ENCODE measurements at regions of chr3 and their contacts with region 1.

Region 1: DNA sequence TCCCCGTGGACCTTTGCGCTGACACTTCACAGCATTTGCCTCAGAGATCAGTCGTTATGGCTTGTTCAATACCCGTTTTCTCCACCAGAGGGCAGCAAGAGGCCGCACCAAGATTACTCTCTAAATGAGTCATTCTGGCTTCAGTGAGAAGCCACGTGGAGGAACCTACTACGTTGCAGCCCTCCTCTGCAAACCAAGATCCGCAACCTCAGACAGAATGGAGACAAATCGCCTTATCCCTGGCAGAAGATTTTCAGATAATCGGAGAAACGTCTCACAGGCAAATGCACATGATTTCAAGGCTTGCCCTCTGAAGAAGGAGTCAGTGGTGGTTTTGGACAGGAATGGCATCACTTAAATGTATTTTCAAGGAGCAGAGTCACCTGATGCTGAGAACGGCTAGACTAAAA is 60.5 kb downstream of the GTPBP8 start:
- DNase-seq: peak; percentile 80
- H3K4me3 Mint-ChIP-seq: no peak overlapping the region
- H3K27ac Mint-ChIP-seq: no peak overlapping the region
- H3K4me1 Mint-ChIP-seq: no peaks in the 10 kb centered on the region
- H3K27me3 Mint-ChIP-seq: no peaks in the 10 kb centered on the region
- CTCF ChIP-seq: peak; percentile 85

Region 2: GRCh38 chr3:112699436-112699978 is 351.8 kb before region 1 on chr3:
- CTCF ChIA-PET with region 1: no interaction called
- POLR2A ChIA-PET with region 1: no interaction called
- intact Hi-C with region 1: no loop called
- DNase-seq: peak; percentile 66
- H3K4me3 Mint-ChIP-seq: no peak overlapping the region
- H3K27ac Mint-ChIP-seq: no peak overlapping the region
- H3K4me1 Mint-ChIP-seq: peaks cover 8% of the 10 kb centered on the region
- H3K27me3 Mint-ChIP-seq: peaks cover 21% of the 10 kb centered on the region
- CTCF ChIP-seq: peak; percentile 44

Region 3: DNA sequence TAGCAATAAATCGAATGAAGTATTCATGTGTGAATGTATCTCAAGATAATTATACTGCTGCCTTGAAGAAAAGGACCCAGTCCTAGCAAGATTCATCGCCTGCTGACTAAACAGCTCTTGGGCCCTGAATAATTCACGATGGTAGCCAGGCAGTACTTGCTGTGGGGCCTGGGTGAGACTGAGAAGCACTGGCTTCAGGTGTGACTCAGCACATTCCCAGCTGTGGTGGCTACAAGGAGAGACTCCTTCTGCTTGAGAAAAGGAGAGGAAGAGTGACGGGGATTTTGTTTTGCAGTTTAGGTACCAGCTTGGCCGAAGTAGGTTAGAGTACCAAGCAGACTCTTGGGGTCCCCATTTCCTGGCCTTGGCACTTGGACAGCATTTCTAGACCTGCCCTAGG is 157.0 kb before region 1 on chr3:
- CTCF ChIA-PET with region 1: no interaction called
- POLR2A ChIA-PET with region 1: no interaction called
- intact Hi-C with region 1: no loop called
- DNase-seq: peak; percentile 22
- H3K4me3 Mint-ChIP-seq: no peak overlapping the region
- H3K27ac Mint-ChIP-seq: no peak overlapping the region
- H3K4me1 Mint-ChIP-seq: no peaks in the 10 kb centered on the region
- H3K27me3 Mint-ChIP-seq: no peaks in the 10 kb centered on the region
- CTCF ChIP-seq: no peak

Region 4: DNA sequence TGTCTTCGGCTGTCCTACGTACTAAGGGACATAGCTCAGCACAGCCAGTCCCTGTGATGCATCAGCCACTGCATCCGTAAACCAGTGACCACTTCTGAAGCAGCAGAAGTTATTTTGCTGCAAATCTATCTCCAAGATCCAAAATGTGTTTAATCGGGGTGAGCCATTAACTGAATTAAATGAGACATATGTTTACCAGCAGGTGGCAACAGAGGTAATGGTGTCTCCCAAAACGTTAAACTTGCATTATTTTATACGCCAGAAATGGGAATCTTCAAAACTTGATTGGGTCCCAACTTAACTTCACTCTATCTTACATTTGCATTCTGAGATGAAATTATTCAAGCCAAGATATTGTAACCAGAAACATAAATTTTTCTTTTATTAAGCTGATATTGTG is 84.8 kb after region 1 on chr3:
- CTCF ChIA-PET with region 1: interaction called, 3 read pairs
- POLR2A ChIA-PET with region 1: no interaction called
- intact Hi-C with region 1: loop called (anchors 1 kb)
- DNase-seq: peak; percentile 53
- H3K4me3 Mint-ChIP-seq: no peak overlapping the region
- H3K27ac Mint-ChIP-seq: no peak overlapping the region
- H3K4me1 Mint-ChIP-seq: no peaks in the 10 kb centered on the region
- H3K27me3 Mint-ChIP-seq: no peaks in the 10 kb centered on the region
- CTCF ChIP-seq: peak; percentile 32

Region 5: GRCh38 chr3:113183748-113184661 is 132.7 kb after region 1 on chr3:
- CTCF ChIA-PET with region 1: no interaction called
- POLR2A ChIA-PET with region 1: no interaction called
- intact Hi-C with region 1: no loop called
- DNase-seq: peak; percentile 52
- H3K4me3 Mint-ChIP-seq: no peak overlapping the region
- H3K27ac Mint-ChIP-seq: no peak overlapping the region
- H3K4me1 Mint-ChIP-seq: no peaks in the 10 kb centered on the region
- H3K27me3 Mint-ChIP-seq: no peaks in the 10 kb centered on the region
- CTCF ChIP-seq: no peak

Region 6: GRCh38 chr3:113211330-113212149 is 160.2 kb after region 1 on chr3 and contains the start of gene BOC:
- CTCF ChIA-PET with region 1: no interaction called
- POLR2A ChIA-PET with region 1: interaction called, 3 read pairs
- intact Hi-C with region 1: loop called (anchors 5 kb)
- DNase-seq: peak; percentile 44
- H3K4me3 Mint-ChIP-seq: peak within 1 kb of the TSS; percentile 75
- H3K27ac Mint-ChIP-seq: no peak within 1 kb of the TSS
- H3K4me1 Mint-ChIP-seq: peaks cover 18% of the 10 kb centered on the region
- H3K27me3 Mint-ChIP-seq: no peaks in the 10 kb centered on the region
- CTCF ChIP-seq: no peak
- total RNA-seq, gene BOC: 1.8 and 2.3 TPM in 2 replicates

Region 7: DNA sequence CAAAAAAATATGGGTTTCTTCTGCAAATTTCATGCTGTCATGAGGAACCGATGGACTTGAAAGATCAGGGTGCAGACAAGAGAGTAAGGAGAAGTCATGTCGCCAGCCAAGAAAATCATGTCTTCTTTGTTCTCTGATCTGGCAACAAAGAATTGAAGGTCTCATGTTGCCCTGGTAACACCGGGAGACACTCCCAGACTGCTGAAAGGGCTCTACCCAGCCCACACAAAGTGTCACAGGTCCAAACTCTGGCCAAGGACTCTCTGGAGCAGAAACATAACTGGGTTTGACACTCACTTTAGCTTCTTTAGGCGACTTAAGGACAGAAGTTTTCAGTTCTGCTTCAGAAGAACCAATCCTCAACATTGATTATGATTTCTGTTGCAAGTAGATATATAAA is 523.9 kb after region 1 on chr3:
- CTCF ChIA-PET with region 1: interaction called, 3 read pairs
- POLR2A ChIA-PET with region 1: no interaction called
- intact Hi-C with region 1: loop called (anchors 2 kb)
- DNase-seq: no peak
- H3K4me3 Mint-ChIP-seq: no peak overlapping the region
- H3K27ac Mint-ChIP-seq: no peak overlapping the region
- H3K4me1 Mint-ChIP-seq: no peaks in the 10 kb centered on the region
- H3K27me3 Mint-ChIP-seq: peaks cover 27% of the 10 kb centered on the region
- CTCF ChIP-seq: no peak

Measured in MCF 10A (cell line).